IMR-90 (cell line): ENCODE measurements at regions of chr16 and their contacts with region 1.

Region 1: DNA sequence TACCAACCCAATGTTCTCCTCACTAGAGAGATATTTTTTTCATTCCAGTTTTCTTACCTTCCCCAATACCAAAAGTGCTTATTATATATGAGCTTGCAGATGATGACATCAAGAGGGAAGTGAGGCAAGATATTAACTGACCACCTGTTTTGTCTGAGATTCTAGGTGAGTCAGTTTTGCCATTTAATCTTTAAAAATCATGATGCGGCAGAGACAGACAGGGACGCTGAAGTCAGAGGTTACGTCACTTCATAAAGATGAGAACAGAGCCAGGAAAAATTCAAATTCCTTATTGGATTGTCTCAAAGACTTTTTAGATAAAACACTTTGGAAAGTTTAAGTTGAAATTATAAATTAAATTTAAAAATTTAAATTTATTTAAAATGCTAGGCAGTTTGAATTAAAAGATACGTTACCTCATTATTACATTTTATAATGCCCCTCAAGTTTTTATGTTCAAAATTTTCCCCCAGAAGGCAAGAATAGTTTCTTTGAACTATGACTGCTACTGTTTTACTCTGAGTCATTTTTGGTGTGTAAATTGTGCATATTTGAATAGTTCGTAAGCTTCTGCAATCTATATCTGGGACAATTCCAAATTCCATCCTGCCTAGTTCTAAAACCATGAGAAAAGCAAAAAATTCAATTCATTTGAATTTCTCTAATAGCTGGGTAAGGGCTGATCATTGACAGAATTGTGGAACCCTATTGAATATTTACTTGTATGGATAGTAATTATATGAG is 839.6 kb upstream of the GOT2 start:
- DNase-seq: peak; percentile 95
- ATAC-seq: peak; percentile 78
- H3K4me3 ChIP-seq: no peak overlapping the region
- H3K27ac ChIP-seq: no peak overlapping the region
- H3K4me1 ChIP-seq: peaks cover 2% of the 10 kb centered on the region; the same call in 1 of the 2 replicates
- H3K27me3 ChIP-seq: no peaks in the 10 kb centered on the region
- CTCF ChIP-seq: no peak
- POLR2A ChIP-seq: no peak
- RAD21 ChIP-seq: no peak

Region 2: DNA sequence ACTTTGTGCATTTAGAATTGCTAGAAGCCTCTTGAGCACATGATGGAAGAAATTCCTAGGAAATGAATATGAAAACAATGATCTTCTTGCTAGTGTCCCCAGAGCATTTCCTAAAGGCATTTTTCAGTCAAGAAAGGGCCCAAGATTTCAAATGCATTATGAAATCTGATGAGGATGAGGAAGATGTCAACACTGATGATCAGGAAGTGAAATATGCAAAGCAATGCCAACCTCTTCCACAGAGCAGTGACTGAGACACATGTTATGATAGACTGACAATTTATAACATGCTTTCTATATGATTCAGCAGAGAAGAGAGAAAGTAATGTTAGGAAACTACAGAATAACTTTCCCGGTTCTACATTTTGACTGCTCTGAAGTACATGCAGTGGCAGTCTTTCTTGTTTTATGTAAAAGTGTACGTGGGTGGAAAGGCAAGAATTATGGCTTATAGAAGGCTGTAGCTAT is 19.5 kb after region 1 on chr16:
- CTCF ChIA-PET with region 1: no interaction called
- POLR2A ChIA-PET with region 1: no interaction called
- dilution Hi-C with region 1: no loop called
- in situ Hi-C with region 1: no loop called
- intact Hi-C with region 1: loop called (anchors 2 kb)
- DNase-seq: peak; percentile 86
- ATAC-seq: peak; percentile 92
- H3K4me3 ChIP-seq: no peak overlapping the region
- H3K27ac ChIP-seq: peak overlapping the region; percentile 52
- H3K4me1 ChIP-seq: peaks cover 7% of the 10 kb centered on the region
- H3K27me3 ChIP-seq: no peaks in the 10 kb centered on the region
- CTCF ChIP-seq: no peak
- POLR2A ChIP-seq: no peak
- RAD21 ChIP-seq: no peak

Region 3: GRCh38 chr16:59632276-59632855 is 58.7 kb after region 1 on chr16:
- CTCF ChIA-PET with region 1: interaction called, 4 read pairs
- POLR2A ChIA-PET with region 1: no interaction called
- dilution Hi-C with region 1: no loop called
- in situ Hi-C with region 1: no loop called
- intact Hi-C with region 1: loop called (anchors 2 kb)
- DNase-seq: peak; percentile 68
- ATAC-seq: peak; percentile 33
- H3K4me3 ChIP-seq: no peak overlapping the region
- H3K27ac ChIP-seq: peak overlapping the region; percentile 49
- H3K4me1 ChIP-seq: peaks cover 17% of the 10 kb centered on the region
- H3K27me3 ChIP-seq: no peaks in the 10 kb centered on the region
- CTCF ChIP-seq: no peak
- POLR2A ChIP-seq: no peak
- RAD21 ChIP-seq: no peak